Cardiac septum (tissue), 1 donor: ENCODE measurements at regions of chr17 and their contacts with region 1.

Region 1: GRCh38 chr17:3048767-3049471 is 14.5 kb downstream of the OR1D5 start:
- DNase-seq: peak; percentile 98

Region 2: DNA sequence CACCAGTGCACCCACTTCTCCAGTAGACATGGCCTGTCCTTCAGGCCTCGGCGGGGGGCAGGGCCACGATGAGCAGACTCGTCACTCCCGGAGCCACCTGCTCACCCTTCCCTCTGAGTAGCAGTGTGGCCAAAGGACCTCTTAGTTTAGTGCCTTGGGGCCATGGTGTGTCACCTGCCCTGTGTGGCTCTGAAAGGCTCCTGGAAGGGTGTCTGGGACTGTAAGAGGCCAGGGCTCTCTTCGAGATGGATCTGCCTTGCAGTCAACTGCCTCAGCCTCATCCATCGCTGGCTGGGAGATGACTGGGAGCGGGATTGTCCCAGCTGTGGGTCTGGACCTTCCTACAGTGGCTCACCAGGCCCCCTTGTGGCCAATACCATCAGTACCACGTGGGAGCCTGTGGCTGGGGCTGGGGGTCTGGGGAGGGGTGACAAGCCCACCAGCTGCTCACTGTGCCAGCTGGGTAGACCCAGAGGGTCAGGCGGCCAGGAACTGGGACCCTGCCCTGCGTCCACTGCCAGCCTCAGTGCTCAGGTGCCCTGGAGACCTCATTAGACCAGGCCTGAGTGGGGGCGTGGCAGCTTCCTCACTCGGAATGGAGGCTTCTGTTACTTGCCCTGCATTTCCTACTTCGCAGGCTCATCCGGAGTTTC is 118.9 kb before region 1 on chr17:
- intact Hi-C with region 1: no loop called
- DNase-seq: no peak

Region 3: DNA sequence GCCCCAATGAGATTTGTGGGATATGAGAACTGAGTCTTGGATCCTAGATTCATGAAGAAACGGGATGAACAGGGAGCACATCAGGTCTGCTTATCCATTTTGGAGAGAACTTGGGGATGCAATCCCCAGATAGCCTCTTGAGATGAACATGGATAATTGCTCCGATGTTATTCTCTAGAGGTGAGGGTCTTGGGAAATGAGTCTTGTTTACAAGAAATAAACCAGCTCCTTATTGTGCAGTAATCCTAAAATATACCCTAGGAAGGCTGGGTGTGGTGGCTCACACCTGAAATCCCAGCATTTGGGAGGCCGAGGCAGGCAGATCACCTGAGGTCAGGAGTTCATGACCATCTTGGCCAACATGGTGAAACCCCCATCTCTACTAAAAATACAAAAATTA is 55.4 kb after region 1 on chr17 and contains the start of gene OR1D2:
- intact Hi-C with region 1: no loop called
- DNase-seq: no peak
- total RNA-seq, gene OR1D2: not detected

Region 4: GRCh38 chr17:3647769-3648555 is 599.0 kb after region 1 on chr17:
- intact Hi-C with region 1: loop called (anchors 5 kb)
- DNase-seq: no peak